Posterior vena cava (tissue), 2 donors: ENCODE measurements at regions of chr16 and their contacts with region 1.

Region 1: DNA sequence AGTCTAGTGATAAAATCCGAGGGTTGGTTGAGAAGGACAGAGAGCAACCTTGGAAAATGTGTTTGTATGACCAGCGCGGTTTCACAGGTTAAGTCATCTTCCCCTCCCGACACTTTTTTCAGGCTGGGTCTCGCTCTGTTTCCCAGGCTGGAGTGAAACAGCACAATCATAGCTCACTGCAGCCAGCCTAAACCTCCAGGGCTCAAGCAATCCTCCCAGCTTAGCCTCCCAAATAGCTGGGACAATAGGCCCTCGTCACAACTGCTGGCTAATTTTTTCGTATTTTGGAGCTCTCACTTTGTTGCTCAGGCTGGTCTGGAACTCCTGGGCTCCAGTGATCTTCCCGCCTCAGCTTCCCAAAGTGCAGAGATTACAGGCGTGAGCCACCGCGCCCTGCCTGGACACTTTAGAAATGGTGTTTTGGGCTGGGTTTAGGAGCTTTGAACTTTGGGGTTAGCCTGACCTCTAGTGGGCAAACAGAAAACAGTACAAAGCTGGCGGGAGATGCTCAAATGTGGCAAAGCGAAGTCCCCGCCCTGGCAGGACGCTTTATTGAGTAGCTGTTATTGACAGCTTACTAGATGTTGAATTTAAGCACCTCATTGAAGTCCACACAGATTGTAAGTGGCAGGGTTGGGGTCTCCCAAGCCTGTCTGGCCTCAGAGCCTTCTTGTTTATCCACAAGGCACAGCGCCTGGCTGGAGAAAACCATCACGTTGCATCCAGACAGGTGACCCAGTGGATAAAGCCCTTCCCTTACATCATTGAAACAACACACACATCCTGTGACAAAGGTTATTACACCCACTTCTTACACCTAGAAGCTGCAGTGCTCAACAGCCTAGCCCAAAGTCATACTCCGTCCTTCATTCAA is 34.7 kb upstream of the RBBP6 start:
- DNase-seq: no peak

Region 2: DNA sequence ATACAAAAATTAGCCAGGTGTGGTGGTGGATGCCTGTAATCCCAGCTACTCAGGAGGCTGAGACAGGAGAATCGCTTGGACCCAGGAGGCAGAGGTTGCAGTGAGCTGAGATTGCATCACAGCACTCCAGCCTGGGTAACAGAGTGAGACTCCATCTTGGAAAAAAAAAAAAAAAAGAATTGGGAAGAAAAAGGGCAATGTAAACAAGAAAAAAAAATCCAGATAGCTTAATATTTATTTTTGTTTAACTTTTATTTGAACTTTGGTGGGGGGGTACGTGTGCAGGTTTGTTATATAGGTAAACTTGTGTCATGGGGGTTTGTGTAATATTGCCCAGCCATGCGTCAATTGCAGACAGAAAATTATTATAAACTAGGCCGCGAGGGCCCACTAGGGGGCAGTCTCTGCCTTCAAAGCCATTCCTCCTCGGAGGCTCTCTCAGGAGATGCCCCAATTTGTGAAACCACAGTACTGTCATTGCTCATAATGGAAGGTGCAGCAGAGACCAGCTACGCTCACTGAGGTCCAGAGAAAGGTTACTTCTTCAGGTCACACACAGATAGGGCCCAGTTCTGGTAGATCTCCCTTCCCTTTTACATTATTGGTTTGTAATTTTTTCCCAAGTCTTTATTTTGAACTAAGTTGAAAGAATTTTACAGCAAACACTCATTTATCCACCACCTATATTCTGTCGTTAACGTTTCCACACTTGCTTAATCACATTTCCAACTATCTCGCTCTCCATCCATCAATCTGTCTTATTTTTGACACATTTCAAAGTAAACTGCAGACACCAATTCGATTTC is 462.7 kb before region 1 on chr16:
- intact Hi-C with region 1: loop called (anchors 5 kb)
- DNase-seq: no peak

Region 3: GRCh38 chr16:24054741-24055491 is 449.8 kb before region 1 on chr16:
- intact Hi-C with region 1: loop called in 1 of 2 experiments (anchors 5 kb)
- DNase-seq: no peak